ENCODE measurements at regions of chr17 and their contacts with region 1.

Region 1: DNA sequence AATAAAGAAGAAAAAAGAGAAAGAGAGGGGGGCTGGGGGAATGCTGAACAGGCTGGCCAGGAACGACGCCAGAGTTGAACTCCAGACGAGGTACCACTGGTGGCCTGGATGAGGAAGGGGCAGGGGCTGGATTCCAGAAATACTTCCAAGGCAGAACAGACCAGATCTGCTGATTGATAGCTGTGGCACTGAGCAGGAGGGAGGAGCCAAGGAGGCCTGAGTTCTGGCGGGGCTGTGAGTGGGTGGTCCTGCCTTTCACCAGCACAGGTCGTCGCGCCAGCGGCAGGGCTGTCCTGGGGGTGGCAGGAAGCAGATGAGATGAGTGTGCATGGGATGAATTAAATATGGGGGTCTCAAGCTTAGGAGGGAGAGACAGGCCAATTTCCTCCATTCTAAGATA is 5.5 kb downstream of the CCDC42 start:
- DNase-seq: no peak
- ATAC-seq: no peak
- H3K4me3 ChIP-seq: no peak overlapping the region
- H3K27ac ChIP-seq: no peak overlapping the region
- H3K4me1 ChIP-seq: no peaks in the 10 kb centered on the region
- H3K27me3 ChIP-seq: no peaks in the 10 kb centered on the region
- CTCF ChIP-seq: no peak
- POLR2A ChIP-seq: no peak

Region 2: GRCh38 chr17:8393420-8394241 is 345.5 kb before region 1 on chr17:
- intact Hi-C with region 1: no loop called
- DNase-seq: no peak
- ATAC-seq: peak in 2 of 4 donors; percentile 44 to 54
- H3K4me3 ChIP-seq: no peak overlapping the region
- H3K27ac ChIP-seq: no peak overlapping the region
- H3K4me1 ChIP-seq: peaks cover 0 to 6% (median 0%) of the 10 kb centered on the region in 12 donors
- H3K27me3 ChIP-seq: peaks cover 0 to 41% (median 21%) of the 10 kb centered on the region in 9 donors
- CTCF ChIP-seq: no peak
- POLR2A ChIP-seq: no peak

Region 3: DNA sequence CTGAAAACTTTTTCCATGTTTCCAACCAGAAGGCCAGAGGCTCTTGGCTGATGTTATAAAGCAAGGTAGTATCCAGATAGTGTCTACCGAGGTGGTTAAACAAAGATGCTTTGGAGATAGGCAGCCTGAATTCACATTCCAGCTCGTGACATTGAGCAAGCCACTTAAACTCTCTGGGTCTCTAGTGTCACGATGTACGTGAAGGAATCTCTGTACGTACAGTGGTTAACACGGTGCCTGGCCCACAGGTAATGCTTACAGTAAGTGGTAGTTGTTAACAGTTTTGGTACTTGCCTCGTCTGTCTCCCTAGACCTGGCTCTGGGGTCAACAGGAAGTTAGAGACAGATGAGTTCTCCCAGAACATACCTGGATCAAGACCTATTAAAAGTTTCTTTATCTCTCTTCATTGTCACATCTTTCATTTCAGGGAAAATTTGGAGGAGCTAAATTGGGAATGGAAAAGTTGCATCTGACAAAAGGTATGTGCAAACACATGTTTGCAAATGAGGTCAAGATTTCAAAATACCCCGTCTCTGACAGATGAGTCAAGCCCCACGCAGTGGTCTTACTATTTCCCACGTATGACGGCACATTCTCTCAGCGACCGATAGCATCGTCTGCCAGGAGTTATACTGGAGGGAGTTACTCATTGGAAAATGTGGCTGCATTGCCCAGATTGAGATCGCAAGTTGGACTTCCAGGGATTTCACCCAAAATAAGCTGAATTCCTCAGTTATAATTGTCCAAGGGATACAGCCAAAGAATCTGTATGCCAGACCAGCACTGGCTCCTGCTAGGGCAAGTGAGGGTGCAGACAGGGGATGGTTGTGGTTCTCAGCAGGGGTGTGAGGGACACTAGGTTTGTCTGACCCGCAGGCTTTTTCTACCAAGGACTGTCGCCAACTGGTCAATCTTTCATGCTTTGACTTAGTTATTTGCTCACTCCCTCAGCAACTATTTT is 89.7 kb before region 1 on chr17:
- intact Hi-C with region 1: loop called in 1 of 10 experiments (anchors 10 kb)
- DNase-seq: peak in 3 of 5 donors; percentile 15 to 62 (median 30)
- ATAC-seq: peak in 3 of 4 donors; percentile 81 to 96 (median 88)
- H3K4me3 ChIP-seq: no peak overlapping the region
- H3K27ac ChIP-seq: peak overlapping the region in 4 of 12 donors; percentile 18 to 82 (median 44)
- H3K4me1 ChIP-seq: peaks cover 0 to 13% (median 0%) of the 10 kb centered on the region in 12 donors
- H3K27me3 ChIP-seq: no peaks in the 10 kb centered on the region
- CTCF ChIP-seq: no peak
- POLR2A ChIP-seq: no peak

Region 4: GRCh38 chr17:8692913-8693727 is 46.0 kb before region 1 on chr17:
- intact Hi-C with region 1: no loop called
- DNase-seq: no peak
- ATAC-seq: no peak
- H3K4me3 ChIP-seq: no peak overlapping the region
- H3K27ac ChIP-seq: no peak overlapping the region
- H3K4me1 ChIP-seq: peaks cover 0 to 16% (median 3%) of the 10 kb centered on the region in 12 donors
- H3K27me3 ChIP-seq: no peaks in the 10 kb centered on the region
- CTCF ChIP-seq: no peak
- POLR2A ChIP-seq: no peak

Region 5: DNA sequence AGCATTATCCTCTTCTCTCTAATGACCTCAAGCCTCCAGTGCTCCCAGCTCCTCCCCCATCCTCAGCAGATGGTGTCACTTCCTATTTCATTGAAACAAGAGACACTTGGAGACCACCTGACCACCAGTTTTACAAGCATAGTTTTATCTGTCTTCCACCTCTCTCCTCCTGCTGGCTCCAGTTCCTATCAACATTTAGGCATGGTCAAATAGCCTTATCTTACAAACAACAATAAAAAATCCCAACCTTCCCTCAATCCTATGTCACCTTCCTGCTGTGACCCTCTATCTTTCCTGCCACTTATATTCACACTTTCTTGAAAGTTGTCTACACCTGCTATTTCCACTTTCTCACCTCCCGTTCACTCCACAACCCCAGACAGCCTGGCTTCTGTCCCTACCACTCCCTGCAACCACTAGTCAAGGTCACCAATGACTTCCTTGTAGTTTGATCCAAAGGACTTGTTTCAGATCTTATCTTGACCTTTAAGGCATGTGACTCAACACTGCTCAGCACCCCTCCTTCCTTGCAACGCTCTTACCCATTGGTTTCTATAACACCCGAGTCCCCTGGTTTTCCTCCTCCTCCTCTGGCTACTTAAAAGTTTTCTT is 277.9 kb after region 1 on chr17:
- intact Hi-C with region 1: no loop called
- DNase-seq: no peak
- ATAC-seq: peak in 3 of 4 donors; percentile 10 to 31 (median 18)
- H3K4me3 ChIP-seq: no peak overlapping the region
- H3K27ac ChIP-seq: peak overlapping the region in 1 of 12 donors; percentile 30
- H3K4me1 ChIP-seq: peaks cover 0 to 28% (median 8%) of the 10 kb centered on the region in 12 donors
- H3K27me3 ChIP-seq: peaks cover 0 to 47% (median 0%) of the 10 kb centered on the region in 9 donors
- CTCF ChIP-seq: no peak
- POLR2A ChIP-seq: no peak

Measured in heart left ventricle (tissue), 16 donors.